ENCODE measurements at regions of chr9 and their contacts with region 1.

Region 1: GRCh38 chr9:136551401-136552116 is 5.7 kb upstream of the NOTCH1 start:
- DNase-seq: peak; percentile 93 to 94
- ATAC-seq: peak; percentile 37
- H3K4me3 ChIP-seq: no peak overlapping the region
- H3K27ac ChIP-seq: peak overlapping the region in 1 of 2 donors; percentile 45
- H3K4me1 ChIP-seq: peaks cover 0 to 2% of the 10 kb centered on the region in 2 donors
- H3K27me3 ChIP-seq: no peaks in the 10 kb centered on the region

Region 2: DNA sequence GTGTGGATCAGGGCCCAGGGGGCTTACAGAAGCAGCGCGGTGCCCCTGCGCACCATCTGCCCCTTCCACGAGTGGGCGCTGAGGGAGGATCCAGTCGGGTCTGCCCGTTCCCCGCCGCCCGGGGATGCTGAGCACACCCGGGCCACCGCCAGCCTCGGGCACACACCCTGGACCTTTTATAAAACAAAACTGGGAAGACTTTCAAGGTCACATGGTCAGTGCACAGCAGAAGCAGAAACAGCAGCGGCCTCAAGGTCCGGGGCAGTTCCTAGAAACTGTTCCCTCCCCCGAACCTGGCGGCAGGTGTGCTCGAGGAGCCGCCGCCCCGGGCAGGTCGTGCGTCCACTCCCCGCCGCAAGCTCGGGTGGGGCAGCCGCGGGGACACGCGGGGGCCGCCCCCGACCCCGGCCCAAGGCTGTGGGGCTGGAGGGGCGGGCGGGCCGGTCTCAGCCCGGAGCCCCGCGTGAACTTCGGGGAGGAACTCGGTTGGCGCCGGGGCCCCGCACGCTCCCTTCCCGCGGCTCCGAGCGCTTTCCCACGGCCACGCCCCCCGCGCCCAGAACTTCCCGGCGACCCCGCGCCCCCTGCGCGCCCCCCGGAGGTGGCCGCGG is 1072.6 kb before region 1 on chr9:
- intact Hi-C with region 1: no loop called
- DNase-seq: peak in 1 of 2 donors; percentile 64
- ATAC-seq: peak; percentile 70
- H3K4me3 ChIP-seq: peak overlapping the region; percentile 89 to 96
- H3K27ac ChIP-seq: no peak overlapping the region
- H3K4me1 ChIP-seq: no peaks in the 10 kb centered on the region
- H3K27me3 ChIP-seq: no peaks in the 10 kb centered on the region

Region 3: GRCh38 chr9:136451221-136451877 is 100.2 kb before region 1 on chr9:
- intact Hi-C with region 1: no loop called
- DNase-seq: no peak
- ATAC-seq: no peak
- H3K4me3 ChIP-seq: no peak overlapping the region
- H3K27ac ChIP-seq: no peak overlapping the region
- H3K4me1 ChIP-seq: no peaks in the 10 kb centered on the region
- H3K27me3 ChIP-seq: no peaks in the 10 kb centered on the region

Region 4: GRCh38 chr9:136567651-136568287 is 16.2 kb after region 1 on chr9:
- intact Hi-C with region 1: loop called in 1 of 2 experiments (anchors 2 kb)
- DNase-seq: peak; percentile 90 to 94
- ATAC-seq: peak; percentile 78
- H3K4me3 ChIP-seq: no peak overlapping the region
- H3K27ac ChIP-seq: peak overlapping the region in 1 of 2 donors; percentile 21
- H3K4me1 ChIP-seq: no peaks in the 10 kb centered on the region
- H3K27me3 ChIP-seq: no peaks in the 10 kb centered on the region